ENCODE measurements at regions of chr7 and their contacts with region 1.

Region 1: DNA sequence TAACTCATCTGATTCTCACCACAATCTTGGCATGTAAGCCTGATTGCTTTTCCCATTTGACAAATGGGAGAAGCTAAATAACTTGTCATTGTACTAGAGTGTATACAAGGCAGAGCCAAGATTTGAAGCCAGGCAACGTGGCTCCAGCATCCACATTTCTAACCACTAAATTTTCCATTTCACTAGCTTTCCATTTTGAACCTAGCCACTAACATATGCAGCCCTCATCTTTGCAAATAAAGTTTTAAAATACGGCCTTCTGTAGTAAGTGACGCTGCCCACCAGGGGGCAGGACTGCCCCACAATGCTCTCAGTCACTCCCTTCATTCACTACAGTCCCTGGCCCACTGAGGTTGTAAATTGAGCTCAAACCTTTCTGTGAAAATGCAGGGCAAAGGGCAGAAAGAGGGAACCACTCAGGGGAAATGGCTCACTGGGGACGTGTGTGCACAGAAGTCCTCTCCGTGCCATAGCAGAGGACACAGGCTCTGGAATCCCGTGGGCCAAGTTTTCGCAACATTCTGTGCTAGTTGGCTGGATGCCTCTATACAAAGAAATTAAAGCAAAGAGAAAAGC is 315.7 kb downstream of the TNS3 start:
- DNase-seq: peak; percentile 66 to 70
- ATAC-seq: peak; percentile 60 to 81; a peak in 5 of 6 replicates
- H3K4me3 ChIP-seq: no peak overlapping the region
- H3K27ac ChIP-seq: peak overlapping the region in 1 of 2 experiments; percentile 45; a peak in 3 of 6 replicates
- H3K4me1 ChIP-seq: peaks cover 10% of the 10 kb centered on the region
- CTCF ChIP-seq: peak; percentile 93
- EP300 ChIP-seq: no peak
- POLR2A ChIP-seq: no peak
- RAD21 ChIP-seq: peak; percentile 95 to 96

Region 2: GRCh38 chr7:47000561-47000960 is 265.7 kb before region 1 on chr7:
- CTCF ChIA-PET with region 1: no interaction called
- POLR2A ChIA-PET with region 1: no interaction called
- DNase-seq: no peak
- ATAC-seq: no peak
- H3K4me3 ChIP-seq: no peak overlapping the region
- H3K27ac ChIP-seq: no peak overlapping the region
- H3K4me1 ChIP-seq: no peaks in the 10 kb centered on the region
- CTCF ChIP-seq: no peak
- EP300 ChIP-seq: no peak
- POLR2A ChIP-seq: no peak
- RAD21 ChIP-seq: no peak

Region 3: DNA sequence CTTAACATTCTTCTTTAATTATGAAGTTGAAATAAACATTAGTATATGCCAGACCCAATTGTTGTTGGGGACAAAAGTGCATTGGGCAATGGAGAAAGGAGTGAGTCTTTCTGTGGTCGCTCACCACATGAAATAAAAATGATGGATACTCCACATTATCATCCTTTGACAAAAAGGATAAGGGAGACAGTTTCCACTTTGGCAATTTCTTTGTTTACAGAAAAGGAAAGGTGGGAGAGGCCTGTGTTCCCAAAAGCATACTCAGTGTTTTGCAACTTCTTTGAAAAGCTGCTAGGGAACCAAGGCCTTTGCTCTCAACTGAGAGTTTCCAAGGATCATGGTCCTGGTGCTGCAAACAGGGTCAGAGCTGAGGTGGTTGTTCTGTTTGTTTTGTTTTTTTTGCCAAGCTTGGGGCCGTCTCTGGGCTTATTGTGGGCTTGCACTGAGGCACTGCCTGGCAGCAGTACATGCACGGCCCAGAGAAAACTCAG is 26.2 kb before region 1 on chr7:
- CTCF ChIA-PET with region 1: interaction called, 19 read pairs
- POLR2A ChIA-PET with region 1: no interaction called
- DNase-seq: no peak
- ATAC-seq: no peak
- H3K4me3 ChIP-seq: no peak overlapping the region
- H3K27ac ChIP-seq: no peak overlapping the region
- H3K4me1 ChIP-seq: no peaks in the 10 kb centered on the region
- CTCF ChIP-seq: no peak
- EP300 ChIP-seq: no peak
- POLR2A ChIP-seq: no peak
- RAD21 ChIP-seq: no peak

Region 4: GRCh38 chr7:47285860-47286522 is 19.8 kb after region 1 on chr7:
- CTCF ChIA-PET with region 1: interaction called, 21 read pairs
- POLR2A ChIA-PET with region 1: no interaction called
- DNase-seq: no peak
- ATAC-seq: no peak
- H3K4me3 ChIP-seq: no peak overlapping the region
- H3K27ac ChIP-seq: no peak overlapping the region; a peak in 1 of 6 replicates
- H3K4me1 ChIP-seq: peaks cover 29% of the 10 kb centered on the region
- CTCF ChIP-seq: no peak
- EP300 ChIP-seq: no peak
- POLR2A ChIP-seq: no peak
- RAD21 ChIP-seq: no peak

Region 5: DNA sequence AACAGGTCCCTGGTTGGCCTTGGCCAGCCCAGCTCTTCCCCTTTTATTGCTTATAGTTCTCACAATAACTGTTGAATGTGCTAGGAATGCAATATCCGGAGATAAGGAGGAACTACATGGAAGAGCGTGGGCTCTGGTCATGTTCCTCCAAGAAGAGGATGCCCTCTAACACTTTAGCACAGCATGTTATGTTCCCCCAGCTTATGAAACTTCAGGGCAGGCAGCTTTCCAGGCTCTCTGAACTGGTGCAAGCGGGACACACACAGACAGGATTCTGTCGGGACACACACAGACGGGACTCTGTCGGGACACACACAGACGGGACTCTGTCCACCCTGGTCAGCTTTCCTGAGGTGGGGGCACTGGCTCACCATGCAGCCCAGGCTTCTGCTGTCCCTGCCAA is 540.5 kb after region 1 on chr7:
- CTCF ChIA-PET with region 1: interaction called, 11 read pairs
- POLR2A ChIA-PET with region 1: no interaction called
- DNase-seq: no peak
- ATAC-seq: peak in 1 of 2 experiments; percentile 15; a peak in 3 of 6 replicates
- H3K4me3 ChIP-seq: no peak overlapping the region
- H3K27ac ChIP-seq: peak overlapping the region; percentile 37 to 76; a peak in 5 of 6 replicates
- H3K4me1 ChIP-seq: peaks cover 12% of the 10 kb centered on the region
- CTCF ChIP-seq: no peak
- EP300 ChIP-seq: no peak
- POLR2A ChIP-seq: no peak
- RAD21 ChIP-seq: no peak

Region 6: DNA sequence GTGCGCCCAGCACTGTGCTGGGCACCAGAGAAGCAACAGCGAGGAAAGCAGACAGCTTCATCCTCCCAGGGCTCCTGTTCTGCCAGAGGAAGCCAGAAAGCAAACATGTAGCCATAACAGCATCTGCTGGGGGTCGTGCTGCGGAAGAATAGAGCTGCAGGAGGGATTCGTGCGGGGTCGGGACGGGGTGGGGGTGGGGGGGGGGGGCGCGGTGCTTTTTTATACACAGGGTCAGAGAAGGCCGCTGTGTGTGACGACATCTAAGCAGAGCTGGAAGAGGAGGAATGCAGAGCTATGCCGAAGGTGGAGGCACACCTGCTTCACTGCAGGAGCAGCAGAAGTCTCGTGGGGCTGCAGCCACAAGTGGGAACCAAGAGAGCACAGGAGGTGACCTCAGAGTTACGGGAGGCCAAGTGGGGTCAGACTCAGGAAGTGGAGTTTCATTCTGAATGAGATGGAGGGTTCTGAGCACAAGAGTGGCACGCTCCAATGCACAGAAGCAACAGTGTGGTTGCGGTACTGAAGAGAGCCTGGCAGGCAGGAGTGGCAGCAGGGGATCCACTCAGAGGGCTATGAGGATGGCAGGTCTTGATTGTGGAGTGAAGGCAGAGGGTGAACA is 671.0 kb after region 1 on chr7:
- CTCF ChIA-PET with region 1: interaction called, 36 read pairs
- POLR2A ChIA-PET with region 1: no interaction called
- DNase-seq: no peak
- ATAC-seq: no peak
- H3K4me3 ChIP-seq: no peak overlapping the region
- H3K27ac ChIP-seq: no peak overlapping the region
- H3K4me1 ChIP-seq: peaks cover 13% of the 10 kb centered on the region
- CTCF ChIP-seq: no peak
- EP300 ChIP-seq: no peak
- POLR2A ChIP-seq: no peak
- RAD21 ChIP-seq: no peak

Region 7: DNA sequence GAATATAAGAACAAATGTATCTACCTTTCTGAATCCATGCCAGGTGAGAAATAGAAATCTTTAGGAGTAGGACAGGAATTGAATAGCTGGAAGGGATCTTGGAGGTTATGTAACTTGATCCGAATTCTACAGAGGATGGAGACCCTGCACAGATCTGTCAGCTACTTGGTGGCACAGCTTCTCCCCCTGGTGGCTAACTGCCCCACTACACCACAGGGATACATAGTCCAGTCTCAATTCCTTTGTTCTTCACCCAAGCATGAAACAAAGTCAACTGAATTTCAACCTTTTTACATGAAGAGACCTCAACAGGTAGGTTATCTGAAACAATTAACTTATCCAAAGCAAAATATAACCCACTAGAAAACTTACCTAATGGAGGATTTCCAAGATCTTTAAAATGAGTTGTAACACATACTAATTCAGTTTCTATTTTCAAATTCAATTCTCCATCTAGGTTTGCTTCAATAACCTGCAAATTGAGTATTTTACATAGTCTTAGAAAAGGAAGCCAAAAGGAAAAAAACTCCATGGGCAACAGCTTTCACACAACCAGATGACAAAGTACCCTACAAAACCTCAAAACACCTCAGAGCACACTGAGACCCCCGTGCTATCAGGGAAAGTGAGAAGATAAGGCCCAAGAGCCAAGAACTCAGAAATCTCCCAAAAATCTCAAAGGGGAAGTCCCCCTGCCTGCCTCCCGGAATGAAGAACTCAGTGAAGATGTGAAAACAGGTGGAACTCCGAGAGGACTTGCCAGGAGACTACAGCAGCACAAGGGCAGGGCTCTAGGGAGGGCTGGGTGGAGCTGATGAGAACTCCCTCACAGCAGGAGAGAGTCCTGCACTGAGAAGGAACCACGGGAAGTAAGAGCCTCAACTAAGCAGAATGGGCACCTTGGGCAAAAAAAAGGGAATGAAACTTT is 702.9 kb after region 1 on chr7:
- CTCF ChIA-PET with region 1: interaction called, 37 read pairs
- POLR2A ChIA-PET with region 1: no interaction called
- DNase-seq: peak; percentile 75 to 82
- ATAC-seq: peak; percentile 81 to 96
- H3K4me3 ChIP-seq: no peak overlapping the region
- H3K27ac ChIP-seq: no peak overlapping the region
- H3K4me1 ChIP-seq: no peaks in the 10 kb centered on the region
- CTCF ChIP-seq: peak; percentile 79
- EP300 ChIP-seq: no peak
- POLR2A ChIP-seq: no peak
- RAD21 ChIP-seq: peak; percentile 73 to 83